Heart left ventricle (tissue), 16 donors: ENCODE measurements at regions of chr12 and their contacts with region 1.

Region 1: GRCh38 chr12:30806989-30807694 is 52.4 kb upstream of the CAPRIN2 start:
- DNase-seq: peak in 2 of 5 donors; percentile 37 to 46
- ATAC-seq: peak; percentile 80 to 92 (median 88)
- H3K4me3 ChIP-seq: no peak overlapping the region
- H3K27ac ChIP-seq: no peak overlapping the region
- H3K4me1 ChIP-seq: peaks cover 0 to 4% (median 1%) of the 10 kb centered on the region in 12 donors
- H3K27me3 ChIP-seq: no peaks in the 10 kb centered on the region
- CTCF ChIP-seq: peak; percentile 61 to 86 (median 79)
- POLR2A ChIP-seq: no peak

Region 2: DNA sequence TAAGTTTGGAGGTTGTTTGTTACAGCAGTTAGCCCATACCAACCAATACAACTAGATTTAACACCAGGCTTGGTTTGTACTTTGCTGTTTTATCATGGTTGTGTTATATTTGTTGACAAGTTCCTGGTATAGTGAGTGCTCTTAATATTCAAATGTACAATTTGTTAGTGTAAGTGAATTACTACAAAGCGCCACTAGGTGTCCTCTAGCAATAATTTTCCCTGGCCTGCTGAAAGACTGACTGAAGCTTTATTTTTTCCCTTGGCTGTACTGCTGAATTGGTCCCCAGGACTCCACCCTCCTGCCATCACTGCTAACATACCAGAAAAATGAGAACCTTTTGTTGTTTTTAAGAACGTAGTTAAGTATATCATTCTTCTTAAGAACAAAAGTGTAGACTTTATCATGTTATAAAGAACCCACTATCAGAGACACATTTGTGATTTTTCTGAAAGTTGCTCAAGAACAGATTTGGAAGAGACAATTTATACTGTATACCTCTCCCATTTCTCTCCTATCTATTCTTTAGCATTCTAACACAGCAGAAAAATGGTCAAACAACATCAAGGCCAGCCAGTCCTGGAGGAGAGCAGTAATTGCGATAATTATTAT is 1733.4 kb before region 1 on chr12:
- intact Hi-C with region 1: loop called in 2 of 10 experiments (anchors 10 kb)
- DNase-seq: no peak
- ATAC-seq: peak; percentile 55 to 81 (median 69)
- H3K4me3 ChIP-seq: no peak overlapping the region
- H3K27ac ChIP-seq: no peak overlapping the region
- H3K4me1 ChIP-seq: no peaks in the 10 kb centered on the region
- H3K27me3 ChIP-seq: no peaks in the 10 kb centered on the region
- CTCF ChIP-seq: peak; percentile 65 to 84 (median 74)
- POLR2A ChIP-seq: no peak

Region 3: GRCh38 chr12:29519585-29520182 is 1287.5 kb before region 1 on chr12:
- intact Hi-C with region 1: loop called in 5 of 10 experiments (anchors 10 kb)
- DNase-seq: peak in 1 of 5 donors; percentile 13
- ATAC-seq: no peak
- H3K4me3 ChIP-seq: no peak overlapping the region
- H3K27ac ChIP-seq: no peak overlapping the region
- H3K4me1 ChIP-seq: no peaks in the 10 kb centered on the region
- H3K27me3 ChIP-seq: no peaks in the 10 kb centered on the region
- CTCF ChIP-seq: peak; percentile 48 to 77 (median 66)
- POLR2A ChIP-seq: no peak

Region 4: GRCh38 chr12:29545102-29545467 is 1262.1 kb before region 1 on chr12:
- intact Hi-C with region 1: loop called in 1 of 10 experiments (anchors 10 kb)
- DNase-seq: no peak
- ATAC-seq: no peak
- H3K4me3 ChIP-seq: no peak overlapping the region
- H3K27ac ChIP-seq: no peak overlapping the region
- H3K4me1 ChIP-seq: peaks cover 0 to 32% (median 5%) of the 10 kb centered on the region in 12 donors
- H3K27me3 ChIP-seq: no peaks in the 10 kb centered on the region
- CTCF ChIP-seq: no peak
- POLR2A ChIP-seq: no peak

Region 5: DNA sequence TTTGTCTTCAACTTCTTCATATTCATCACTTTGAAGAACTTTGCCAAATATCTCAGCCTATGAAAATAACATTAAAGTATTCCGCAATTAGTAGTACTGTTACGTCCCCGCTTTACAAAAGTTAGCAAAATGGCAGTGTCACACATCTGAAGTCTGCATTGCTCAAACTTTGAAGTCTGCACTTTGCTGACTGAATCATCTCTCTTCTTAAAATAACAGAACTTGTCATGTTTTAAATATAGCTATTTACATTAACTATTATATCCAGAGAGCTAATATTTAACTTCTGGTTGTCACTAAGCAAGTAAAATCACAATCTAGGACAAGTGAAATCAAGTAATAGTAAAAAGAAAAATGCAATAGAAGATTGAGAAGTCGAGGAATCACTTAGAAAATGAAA is 145.9 kb before region 1 on chr12:
- intact Hi-C with region 1: no loop called
- DNase-seq: no peak
- ATAC-seq: no peak
- H3K4me3 ChIP-seq: no peak overlapping the region
- H3K27ac ChIP-seq: no peak overlapping the region
- H3K4me1 ChIP-seq: no peaks in the 10 kb centered on the region
- H3K27me3 ChIP-seq: no peaks in the 10 kb centered on the region
- CTCF ChIP-seq: no peak
- POLR2A ChIP-seq: no peak

Region 6: DNA sequence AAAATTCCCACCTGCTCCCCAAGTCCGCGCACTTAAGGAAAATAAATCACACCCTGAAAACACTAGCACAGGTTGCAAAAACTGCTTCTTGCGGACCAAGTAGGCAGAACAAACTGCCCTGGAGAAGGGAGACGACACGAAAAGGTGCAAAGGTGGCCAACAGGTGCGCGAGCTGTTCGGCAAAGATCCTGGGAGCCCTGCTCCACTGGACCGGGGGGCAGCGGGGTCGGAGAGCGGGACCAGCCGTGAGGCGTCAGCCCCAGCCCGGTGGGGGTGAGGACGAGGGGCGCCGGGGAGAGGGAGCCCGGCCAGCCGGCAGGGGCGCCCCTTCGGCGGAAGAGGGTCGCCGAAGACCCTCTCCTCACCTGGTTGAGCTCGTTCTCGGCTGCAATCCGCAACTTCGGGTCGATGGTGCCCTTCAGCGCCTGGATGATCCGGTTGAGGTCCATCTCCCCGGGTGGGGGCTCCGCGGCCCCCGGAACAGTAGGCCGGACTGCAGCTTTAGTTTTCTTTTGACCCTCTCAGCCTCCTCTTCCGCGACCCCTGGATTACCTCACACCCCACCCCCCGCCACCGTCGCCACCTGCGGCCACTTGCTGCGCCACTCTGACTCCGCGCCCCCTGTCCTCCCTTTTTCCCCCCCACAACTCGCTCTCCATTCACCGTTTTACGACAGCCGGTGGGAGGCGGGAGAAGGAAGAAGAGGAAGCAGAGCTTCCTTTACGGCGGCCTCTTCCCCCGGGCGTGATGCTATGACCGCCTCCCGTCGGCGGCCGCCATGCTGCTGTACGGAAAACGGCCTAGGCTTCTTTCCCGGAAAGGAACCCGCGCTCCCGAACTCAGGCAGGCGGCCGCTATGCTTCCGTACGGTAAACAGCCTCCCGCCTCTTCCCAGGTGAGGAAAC is 111.7 kb before region 1 on chr12 and contains the start of gene IPO8:
- intact Hi-C with region 1: loop called in 5 of 10 experiments (anchors 1 to 10 kb)
- DNase-seq: peak; percentile 93 to 96 (median 94)
- ATAC-seq: peak; percentile 95 to 98 (median 96)
- H3K4me3 ChIP-seq: peak within 1 kb of the TSS; percentile 84 to 99 (median 96)
- H3K27ac ChIP-seq: peak within 1 kb of the TSS; percentile 21 to 88 (median 74)
- H3K4me1 ChIP-seq: peaks cover 0 to 42% (median 26%) of the 10 kb centered on the region in 12 donors
- H3K27me3 ChIP-seq: no peaks in the 10 kb centered on the region
- CTCF ChIP-seq: peak in 5 of 12 donors; percentile 22 to 43 (median 26)
- POLR2A ChIP-seq: peak in 1 of 2 donors; percentile 25
- total RNA-seq, gene IPO8: 16.9 to 37.2 (median 28.7) TPM

Region 7: GRCh38 chr12:30754709-30755394 is 52.3 kb before region 1 on chr12 and contains the start of gene CAPRIN2:
- intact Hi-C with region 1: loop called in 5 of 10 experiments (anchors 2 to 5 kb)
- DNase-seq: peak; percentile 96 to 99 (median 97)
- ATAC-seq: peak; percentile 96 to 99 (median 98)
- H3K4me3 ChIP-seq: peak within 1 kb of the TSS; percentile 59 to 99 (median 82)
- H3K27ac ChIP-seq: peak within 1 kb of the TSS; percentile 75 to 93 (median 88)
- H3K4me1 ChIP-seq: peaks cover 0 to 30% (median 13%) of the 10 kb centered on the region in 12 donors
- H3K27me3 ChIP-seq: no peaks in the 10 kb centered on the region
- CTCF ChIP-seq: peak in 10 of 12 donors; percentile 20 to 68 (median 46)
- POLR2A ChIP-seq: peak in 1 of 2 donors; percentile 79
- total RNA-seq, gene CAPRIN2: 15.3 to 33.6 (median 30.4) TPM

Region 8: DNA sequence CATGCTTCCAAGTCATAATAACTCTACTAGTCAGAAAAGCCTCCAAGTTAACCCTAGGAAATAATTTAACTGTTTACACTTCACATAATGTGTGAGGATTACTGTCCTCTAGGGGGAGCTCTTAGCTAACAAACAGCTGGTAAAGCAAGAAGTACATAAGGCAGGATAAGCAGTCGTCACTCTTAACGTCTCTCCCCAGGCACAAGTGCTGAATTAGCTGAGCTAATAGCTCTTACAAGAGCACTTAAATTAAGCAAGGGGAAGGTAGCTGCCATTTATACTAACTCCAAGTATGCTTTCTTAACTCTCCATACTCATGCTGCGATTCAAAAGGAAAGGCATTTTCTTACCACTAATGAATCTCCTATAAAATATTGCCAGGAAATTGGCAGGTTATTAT is 40.1 kb after region 1 on chr12:
- intact Hi-C with region 1: no loop called
- DNase-seq: no peak
- ATAC-seq: no peak
- H3K4me3 ChIP-seq: no peak overlapping the region
- H3K27ac ChIP-seq: no peak overlapping the region
- H3K4me1 ChIP-seq: peaks cover 0 to 8% (median 0%) of the 10 kb centered on the region in 12 donors
- H3K27me3 ChIP-seq: peaks cover 0 to 5% (median 0%) of the 10 kb centered on the region in 9 donors
- CTCF ChIP-seq: peak; percentile 60 to 81 (median 70)
- POLR2A ChIP-seq: no peak

Region 9: GRCh38 chr12:30862486-30862885 is 55.3 kb after region 1 on chr12:
- intact Hi-C with region 1: no loop called
- DNase-seq: peak; percentile 38 to 76 (median 58)
- ATAC-seq: peak; percentile 67 to 87 (median 84)
- H3K4me3 ChIP-seq: no peak overlapping the region
- H3K27ac ChIP-seq: no peak overlapping the region
- H3K4me1 ChIP-seq: peaks cover 0 to 7% (median 0%) of the 10 kb centered on the region in 12 donors
- H3K27me3 ChIP-seq: no peaks in the 10 kb centered on the region
- CTCF ChIP-seq: no peak
- POLR2A ChIP-seq: no peak